AG04449 (cell line): ENCODE measurements at regions of chr11 and their contacts with region 1.

Region 1: DNA sequence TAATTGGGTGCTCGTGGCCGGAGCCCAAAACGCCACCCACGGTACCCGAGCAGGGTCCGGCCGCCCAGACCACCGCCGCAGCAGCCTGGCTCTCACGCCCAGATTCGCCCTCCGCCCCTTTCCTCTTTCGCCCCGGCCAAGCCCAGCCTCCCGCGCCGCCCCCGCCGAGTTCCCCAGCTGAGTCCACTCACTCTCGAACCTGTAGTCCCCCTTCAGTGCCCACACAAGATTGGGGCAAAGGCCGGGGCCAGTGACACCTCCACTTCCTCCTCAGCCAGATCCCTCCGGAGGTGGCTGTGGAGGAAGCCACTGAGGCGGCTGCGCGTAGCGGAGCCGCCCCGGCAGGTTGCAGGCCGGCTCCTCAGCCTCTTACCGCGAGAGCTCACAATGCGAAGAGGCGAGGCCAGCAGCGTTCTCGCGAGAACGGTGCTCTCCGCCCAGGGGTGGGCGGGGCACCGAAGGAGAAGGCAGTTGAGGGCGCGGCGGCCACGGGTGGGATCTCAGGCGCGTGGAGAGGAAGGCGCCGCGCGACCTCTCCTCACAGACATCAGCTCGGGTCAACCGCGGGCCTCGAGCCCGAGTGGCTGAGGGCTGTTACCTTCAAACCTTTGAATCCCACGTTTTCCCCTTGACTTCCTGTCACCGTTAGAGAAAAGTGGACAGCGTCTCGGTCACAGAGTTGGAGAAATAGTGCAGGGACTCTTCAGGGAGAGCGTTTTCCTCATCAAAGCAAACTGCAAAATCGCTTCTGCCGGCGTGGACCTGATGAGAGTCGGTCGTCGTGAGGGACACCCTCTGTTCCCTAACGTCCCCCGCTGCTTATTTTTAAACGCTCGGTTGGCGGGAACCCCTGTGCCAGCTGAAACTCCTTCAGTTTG is at the start of gene BTBD10:
- DNase-seq: peak; percentile 49
- H3K4me3 ChIP-seq: peak within 1 kb of the TSS; percentile 87
- CTCF ChIP-seq: no peak

Region 2: DNA sequence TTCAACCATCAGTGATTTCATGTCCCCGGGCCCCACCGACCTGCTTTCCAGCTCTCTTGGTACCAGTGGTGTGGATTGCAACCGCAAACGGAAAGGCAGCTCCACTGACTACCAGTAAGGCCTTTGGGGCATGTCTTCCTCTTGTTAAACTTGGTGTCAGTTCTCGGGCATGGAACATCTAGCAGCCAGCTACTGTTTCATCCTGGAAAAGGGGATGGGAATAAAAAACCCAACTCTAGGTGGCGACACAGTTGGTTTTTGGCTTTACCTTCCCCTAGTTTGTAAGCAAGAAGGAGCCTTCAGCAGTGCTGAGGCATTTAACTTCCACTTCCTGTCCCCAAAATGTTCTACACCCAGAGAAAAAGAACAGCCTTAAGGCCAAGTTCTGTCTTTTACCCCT is 108.8 kb before region 1 on chr11:
- CTCF ChIA-PET with region 1: interaction called, 13 read pairs
- POLR2A ChIA-PET with region 1: no interaction called
- DNase-seq: no peak
- H3K4me3 ChIP-seq: no peak overlapping the region
- CTCF ChIP-seq: peak; percentile 19

Region 3: GRCh38 chr11:13448876-13449275 is 14.3 kb before region 1 on chr11:
- CTCF ChIA-PET with region 1: interaction called, 13 read pairs
- POLR2A ChIA-PET with region 1: interaction called, 5 read pairs
- DNase-seq: no peak
- H3K4me3 ChIP-seq: no peak overlapping the region
- CTCF ChIP-seq: no peak

Region 4: GRCh38 chr11:13473013-13473722 is 10.0 kb after region 1 on chr11:
- CTCF ChIA-PET with region 1: interaction called, 28 read pairs
- POLR2A ChIA-PET with region 1: interaction called, 3 read pairs
- DNase-seq: no peak
- H3K4me3 ChIP-seq: no peak overlapping the region
- CTCF ChIP-seq: no peak

Region 5: DNA sequence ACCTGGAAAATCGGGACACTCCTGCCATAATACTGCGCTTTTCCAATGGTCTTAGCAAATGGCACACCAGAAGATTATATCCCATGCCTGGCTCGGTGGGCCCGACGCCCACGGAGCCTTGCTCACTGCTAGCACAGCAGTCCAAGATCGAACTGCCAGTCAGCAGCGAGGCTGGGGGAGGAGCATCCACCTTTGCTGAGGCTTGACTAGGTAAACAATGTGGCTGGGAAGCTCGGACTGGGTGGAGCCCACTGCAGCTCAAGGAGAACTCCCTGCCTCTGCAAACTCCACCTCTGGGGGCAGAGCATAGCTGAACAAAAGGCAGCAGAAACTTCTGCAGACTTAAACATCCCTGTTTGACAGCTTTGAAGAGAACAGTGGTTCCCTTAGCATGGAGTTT is 17.1 kb after region 1 on chr11:
- CTCF ChIA-PET with region 1: interaction called, 28 read pairs
- POLR2A ChIA-PET with region 1: no interaction called
- DNase-seq: no peak
- H3K4me3 ChIP-seq: no peak overlapping the region
- CTCF ChIP-seq: no peak

Region 6: GRCh38 chr11:13826505-13827278 is 363.6 kb after region 1 on chr11:
- CTCF ChIA-PET with region 1: no interaction called
- POLR2A ChIA-PET with region 1: no interaction called
- DNase-seq: no peak
- H3K4me3 ChIP-seq: no peak overlapping the region
- CTCF ChIP-seq: no peak